Breast epithelium (tissue), 4 donors: ENCODE measurements at regions of chr14 and their contacts with region 1.

Region 1: GRCh38 chr14:96666088-96666487 is 131.1 kb upstream of the VRK1 start:
- DNase-seq: no peak
- H3K4me3 ChIP-seq: no peak overlapping the region
- H3K27ac ChIP-seq: no peak overlapping the region
- H3K4me1 ChIP-seq: no peaks in the 10 kb centered on the region
- H3K27me3 ChIP-seq: peaks cover 0 to 24% of the 10 kb centered on the region in 2 donors
- CTCF ChIP-seq: no peak
- POLR2A ChIP-seq: no peak

Region 2: GRCh38 chr14:95808371-95808770 is 857.7 kb before region 1 on chr14:
- intact Hi-C with region 1: loop called (anchors 5 kb)
- DNase-seq: no peak
- H3K4me3 ChIP-seq: no peak overlapping the region
- H3K27ac ChIP-seq: no peak overlapping the region
- H3K4me1 ChIP-seq: no peaks in the 10 kb centered on the region
- H3K27me3 ChIP-seq: peaks cover 0 to 4% of the 10 kb centered on the region in 2 donors
- CTCF ChIP-seq: no peak
- POLR2A ChIP-seq: no peak

Region 3: GRCh38 chr14:96362965-96363756 is 302.9 kb before region 1 on chr14 and contains the starts of genes ATG2B and GSKIP:
- intact Hi-C with region 1: loop called (anchors 5 kb)
- DNase-seq: peak; percentile 89 to 93
- H3K4me3 ChIP-seq: peak within 1 kb of the TSS; percentile 95 to 99 (median 99)
- H3K27ac ChIP-seq: peak within 1 kb of the TSS; percentile 89 to 97
- H3K4me1 ChIP-seq: peaks cover 0 to 20% of the 10 kb centered on the region in 2 donors
- H3K27me3 ChIP-seq: no peaks in the 10 kb centered on the region
- CTCF ChIP-seq: no peak
- POLR2A ChIP-seq: peak; percentile 23
- total RNA-seq, gene ATG2B: 23.7 to 51.4 (median 42.0) TPM
- total RNA-seq, gene GSKIP: 9.8 to 23.3 (median 14.4) TPM